ENCODE measurements at regions of chr16 and their contacts with region 1.

Region 1: GRCh38 chr16:25235991-25236390 is 19.2 kb downstream of the AQP8 start:
- DNase-seq: no peak
- ATAC-seq: no peak
- H3K4me3 ChIP-seq: no peak overlapping the region
- H3K4me3 Mint-ChIP-seq: no peak overlapping the region
- H3K27ac ChIP-seq: no peak overlapping the region
- H3K27ac Mint-ChIP-seq: no peak overlapping the region
- H3K4me1 ChIP-seq: no peaks in the 10 kb centered on the region
- H3K4me1 Mint-ChIP-seq: peaks cover 6% of the 10 kb centered on the region
- H3K27me3 ChIP-seq: no peaks in the 10 kb centered on the region
- H3K27me3 Mint-ChIP-seq: no peaks in the 10 kb centered on the region
- CTCF ChIP-seq: no peak

Region 2: DNA sequence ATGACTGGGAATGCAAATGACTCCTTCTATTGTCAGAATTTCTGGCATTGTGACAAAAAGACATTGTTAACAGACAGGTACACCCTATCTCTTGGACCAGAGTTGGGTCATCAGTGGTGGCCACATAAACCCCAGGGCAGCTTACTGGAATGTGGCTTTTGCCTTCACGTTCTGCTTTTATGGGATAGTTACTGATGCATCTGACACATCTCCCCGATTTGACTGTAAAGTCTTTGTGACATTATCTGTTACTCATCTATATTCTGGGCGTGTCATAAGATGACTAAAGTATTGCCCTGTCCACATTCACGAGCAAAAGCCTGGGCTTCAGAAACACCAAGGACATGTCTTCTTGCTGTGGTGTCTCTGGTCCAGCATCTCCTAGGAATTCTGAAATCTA is 38.0 kb before region 1 on chr16:
- CTCF ChIA-PET with region 1: no interaction called
- POLR2A ChIA-PET with region 1: no interaction called
- intact Hi-C with region 1: no loop called
- DNase-seq: no peak
- ATAC-seq: no peak
- H3K4me3 ChIP-seq: no peak overlapping the region
- H3K4me3 Mint-ChIP-seq: no peak overlapping the region
- H3K27ac ChIP-seq: no peak overlapping the region
- H3K27ac Mint-ChIP-seq: no peak overlapping the region
- H3K4me1 ChIP-seq: no peaks in the 10 kb centered on the region
- H3K4me1 Mint-ChIP-seq: no peaks in the 10 kb centered on the region
- H3K27me3 ChIP-seq: no peaks in the 10 kb centered on the region
- H3K27me3 Mint-ChIP-seq: no peaks in the 10 kb centered on the region
- CTCF ChIP-seq: no peak

Region 3: DNA sequence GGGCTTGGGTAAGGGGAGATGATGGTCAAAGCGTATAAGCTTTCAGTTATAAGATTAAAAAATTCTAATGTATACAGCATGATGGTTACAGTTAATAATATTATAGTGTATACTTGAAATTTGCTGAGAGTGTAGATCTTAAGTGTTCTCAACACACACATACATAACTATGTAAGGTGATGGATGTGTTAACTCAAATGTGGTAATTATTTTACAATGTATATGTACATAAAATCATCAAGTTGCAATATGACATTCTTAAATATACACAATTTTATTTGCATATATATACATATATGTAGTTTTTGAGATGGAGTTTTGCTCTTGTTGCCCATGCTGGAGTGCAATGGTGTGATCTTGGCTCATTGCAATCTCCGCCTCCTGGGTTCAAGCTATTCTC is 14.5 kb after region 1 on chr16:
- CTCF ChIA-PET with region 1: no interaction called
- POLR2A ChIA-PET with region 1: no interaction called
- intact Hi-C with region 1: no loop called
- DNase-seq: no peak
- ATAC-seq: no peak
- H3K4me3 ChIP-seq: no peak overlapping the region
- H3K4me3 Mint-ChIP-seq: no peak overlapping the region
- H3K27ac ChIP-seq: no peak overlapping the region
- H3K27ac Mint-ChIP-seq: no peak overlapping the region
- H3K4me1 ChIP-seq: peaks cover 8% of the 10 kb centered on the region
- H3K4me1 Mint-ChIP-seq: peaks cover 11% of the 10 kb centered on the region
- H3K27me3 ChIP-seq: no peaks in the 10 kb centered on the region
- H3K27me3 Mint-ChIP-seq: no peaks in the 10 kb centered on the region
- CTCF ChIP-seq: no peak

Region 4: GRCh38 chr16:27109666-27110523 is 1873.9 kb after region 1 on chr16:
- CTCF ChIA-PET with region 1: no interaction called
- POLR2A ChIA-PET with region 1: no interaction called
- intact Hi-C with region 1: loop called in 1 of 2 experiments (anchors 5 kb)
- DNase-seq: peak; percentile 53 to 85 (median 74)
- ATAC-seq: peak; percentile 96
- H3K4me3 ChIP-seq: peak overlapping the region; percentile 41
- H3K4me3 Mint-ChIP-seq: peak overlapping the region; percentile 54
- H3K27ac ChIP-seq: no peak overlapping the region
- H3K27ac Mint-ChIP-seq: no peak overlapping the region
- H3K4me1 ChIP-seq: peaks cover 19% of the 10 kb centered on the region
- H3K4me1 Mint-ChIP-seq: no peaks in the 10 kb centered on the region
- H3K27me3 ChIP-seq: no peaks in the 10 kb centered on the region
- H3K27me3 Mint-ChIP-seq: no peaks in the 10 kb centered on the region
- CTCF ChIP-seq: peak; percentile 78